ENCODE measurements at regions of chr12 and their contacts with region 1.

Region 1: GRCh38 chr12:110575326-110575725 is 7.8 kb downstream of the PPTC7 start:
- DNase-seq: no peak
- CTCF ChIP-seq: no peak

Region 2: DNA sequence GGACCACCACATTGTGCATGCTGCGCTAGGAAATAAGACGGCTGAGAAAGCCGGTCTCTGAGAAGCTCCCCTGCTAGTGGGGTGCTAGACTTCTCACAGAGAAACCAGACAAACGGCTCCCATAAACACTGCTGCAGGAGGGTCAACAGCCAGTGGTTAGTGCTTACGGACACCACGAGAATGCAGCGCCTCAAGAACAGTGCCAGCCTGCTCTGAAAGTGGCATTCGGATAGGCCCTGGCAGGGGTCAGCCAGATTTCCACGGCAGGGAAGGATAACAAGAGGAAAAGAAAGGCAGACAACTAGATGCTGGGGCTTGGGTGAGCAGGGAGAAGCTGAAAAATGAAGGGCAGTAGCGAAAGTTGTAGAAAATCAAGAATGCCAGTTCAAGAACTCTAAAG is 18.6 kb before region 1 on chr12:
- CTCF ChIA-PET with region 1: interaction called, 14 read pairs
- POLR2A ChIA-PET with region 1: no interaction called
- DNase-seq: no peak
- CTCF ChIP-seq: no peak

Region 3: GRCh38 chr12:110627500-110628195 is 52.3 kb after region 1 on chr12:
- CTCF ChIA-PET with region 1: no interaction called
- POLR2A ChIA-PET with region 1: no interaction called
- DNase-seq: no peak
- CTCF ChIP-seq: no peak